Heart right ventricle (tissue), 16 donors: ENCODE measurements at regions of chr17 and their contacts with region 1.

Region 1: GRCh38 chr17:54372069-54372749 is 528.4 kb upstream of the TOM1L1 start:
- DNase-seq: no peak
- ATAC-seq: no peak
- H3K4me3 ChIP-seq: no peak overlapping the region
- H3K27ac ChIP-seq: no peak overlapping the region
- H3K4me1 ChIP-seq: no peaks in the 10 kb centered on the region
- H3K27me3 ChIP-seq: no peaks in the 10 kb centered on the region
- CTCF ChIP-seq: no peak

Region 2: DNA sequence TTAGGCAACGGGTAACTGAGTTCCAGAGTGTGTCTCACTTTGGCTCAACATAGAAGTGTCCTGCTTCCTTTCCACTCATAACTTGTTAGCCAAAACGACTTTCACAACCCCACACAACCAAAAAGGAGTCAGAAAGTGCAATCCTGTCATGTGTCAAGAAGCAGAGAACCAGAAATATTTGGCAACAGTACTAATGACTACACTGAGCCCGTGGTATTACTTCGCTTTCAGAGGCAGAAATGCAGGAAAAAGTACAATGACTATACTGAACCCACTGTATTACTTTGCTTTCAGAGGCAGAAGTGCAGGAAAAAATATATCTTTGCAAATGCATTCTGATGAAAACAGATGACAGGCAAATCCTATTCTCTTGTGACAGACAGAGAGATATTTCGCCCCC is 64.9 kb before region 1 on chr17:
- intact Hi-C with region 1: loop called in 1 of 10 experiments (anchors 10 kb)
- DNase-seq: no peak
- ATAC-seq: no peak
- H3K4me3 ChIP-seq: no peak overlapping the region
- H3K27ac ChIP-seq: no peak overlapping the region
- H3K4me1 ChIP-seq: no peaks in the 10 kb centered on the region
- H3K27me3 ChIP-seq: no peaks in the 10 kb centered on the region
- CTCF ChIP-seq: no peak